ENCODE measurements at regions of chr6 and their contacts with region 1.

Region 1: DNA sequence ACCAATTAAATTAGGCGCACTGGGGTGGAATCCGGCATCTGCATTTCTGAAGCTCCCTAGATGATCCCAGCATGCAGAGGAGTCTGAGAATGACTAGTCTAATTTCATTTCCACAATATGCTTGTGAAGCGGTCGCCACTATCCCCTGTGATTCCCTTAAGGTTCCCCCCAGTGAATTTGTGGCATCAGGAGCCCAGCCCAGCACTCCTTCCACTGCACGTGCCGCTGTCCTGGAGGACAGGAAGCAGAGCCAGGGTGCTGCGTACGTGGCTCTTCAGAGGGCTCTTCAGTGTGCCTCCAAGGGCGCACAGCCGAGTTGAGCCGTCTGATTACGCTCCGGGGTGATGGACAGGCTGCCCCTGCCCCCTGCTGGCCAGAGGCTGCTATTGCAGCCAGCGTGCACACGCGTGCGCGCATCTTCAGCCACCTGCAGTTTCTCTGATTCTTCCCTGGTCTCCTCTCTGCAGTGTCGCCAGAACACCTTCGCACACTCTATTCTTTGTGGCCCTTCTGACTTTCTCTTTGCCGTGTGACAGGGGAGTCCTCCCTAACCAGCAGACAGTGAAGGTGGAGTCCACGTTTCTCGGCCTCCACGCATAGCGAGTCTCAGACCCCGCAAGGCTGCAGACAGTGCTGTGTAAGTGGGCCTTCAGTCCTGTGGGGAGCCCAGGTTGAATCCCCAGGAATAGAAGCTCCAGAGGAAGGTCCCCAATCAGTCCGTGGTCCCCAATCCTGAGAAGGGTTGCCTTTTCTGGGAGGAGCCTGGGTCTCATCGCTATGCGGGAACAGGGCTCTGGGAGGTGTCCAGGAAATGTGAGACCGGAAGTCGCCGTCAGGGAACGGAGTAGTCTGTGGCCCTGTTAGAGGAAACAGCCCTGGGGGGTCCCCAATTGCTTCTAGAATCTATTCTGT is 16.5 kb upstream of the NCR2 start:
- DNase-seq: peak; percentile 92
- ATAC-seq: peak; percentile 99
- H3K4me3 ChIP-seq: peak overlapping the region; percentile 16 to 54 (median 46)
- H3K4me3 Mint-ChIP-seq: peak overlapping the region; percentile 88
- H3K27ac ChIP-seq: peak overlapping the region; percentile 39 to 55
- H3K27ac Mint-ChIP-seq: peak overlapping the region; percentile 91
- H3K4me1 ChIP-seq: peaks cover 47 to 48% of the 10 kb centered on the region in 2 donors
- H3K4me1 Mint-ChIP-seq: peaks cover 34% of the 10 kb centered on the region
- H3K27me3 ChIP-seq: no peaks in the 10 kb centered on the region
- H3K27me3 Mint-ChIP-seq: no peaks in the 10 kb centered on the region
- CTCF ChIP-seq: peak; percentile 100

Region 2: DNA sequence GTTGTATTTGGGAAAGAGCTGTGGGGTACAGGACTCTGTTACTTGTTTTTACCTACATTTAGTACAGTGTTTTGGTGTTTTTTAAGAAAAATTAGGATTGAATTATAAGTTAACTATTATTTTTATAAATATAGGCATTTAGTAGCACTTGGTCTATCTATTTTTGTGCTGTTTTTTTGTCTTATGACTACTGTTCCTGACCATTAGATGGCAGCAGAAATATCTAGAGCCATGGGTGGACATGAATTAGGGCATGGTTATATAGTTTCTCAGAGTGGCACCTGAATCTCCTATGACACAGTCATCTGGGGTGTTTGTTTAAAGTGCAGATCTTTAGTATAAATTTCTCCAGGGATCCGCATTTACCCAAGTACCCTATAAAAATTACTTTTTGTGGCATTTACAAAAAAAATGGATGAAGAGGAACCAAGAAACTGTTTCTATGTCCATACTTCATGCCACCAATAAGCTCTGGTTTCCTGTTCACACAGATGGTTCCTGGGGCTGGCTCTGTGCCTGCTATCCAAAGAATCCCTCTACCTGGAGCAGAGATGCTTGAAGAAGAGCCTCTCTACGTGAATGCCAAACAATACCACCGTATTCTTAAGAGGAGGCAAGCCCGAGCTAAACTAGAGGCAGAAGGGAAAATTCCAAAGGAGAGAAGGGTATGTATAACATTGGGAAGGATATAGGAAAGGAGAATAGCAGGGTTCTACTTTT is 226.3 kb before region 1 on chr6:
- CTCF ChIA-PET with region 1: interaction called, 12 read pairs
- POLR2A ChIA-PET with region 1: no interaction called
- intact Hi-C with region 1: loop called (anchors 1 kb)
- DNase-seq: peak; percentile 27
- ATAC-seq: no peak
- H3K4me3 ChIP-seq: no peak overlapping the region
- H3K4me3 Mint-ChIP-seq: no peak overlapping the region
- H3K27ac ChIP-seq: no peak overlapping the region
- H3K27ac Mint-ChIP-seq: no peak overlapping the region
- H3K4me1 ChIP-seq: no peaks in the 10 kb centered on the region
- H3K4me1 Mint-ChIP-seq: no peaks in the 10 kb centered on the region
- H3K27me3 ChIP-seq: no peaks in the 10 kb centered on the region
- H3K27me3 Mint-ChIP-seq: no peaks in the 10 kb centered on the region
- CTCF ChIP-seq: peak; percentile 55

Region 3: GRCh38 chr6:41182069-41183034 is 136.6 kb before region 1 on chr6:
- CTCF ChIA-PET with region 1: no interaction called
- POLR2A ChIA-PET with region 1: no interaction called
- intact Hi-C with region 1: loop called (anchors 5 kb)
- DNase-seq: peak; percentile 66
- ATAC-seq: peak; percentile 71
- H3K4me3 ChIP-seq: no peak overlapping the region
- H3K4me3 Mint-ChIP-seq: peak overlapping the region; percentile 35
- H3K27ac ChIP-seq: peak overlapping the region; percentile 70 to 74
- H3K27ac Mint-ChIP-seq: peak overlapping the region; percentile 75
- H3K4me1 ChIP-seq: peaks cover 48 to 50% of the 10 kb centered on the region in 2 donors
- H3K4me1 Mint-ChIP-seq: peaks cover 54% of the 10 kb centered on the region
- H3K27me3 ChIP-seq: no peaks in the 10 kb centered on the region
- H3K27me3 Mint-ChIP-seq: peaks cover 3% of the 10 kb centered on the region
- CTCF ChIP-seq: peak; percentile 72

Region 4: GRCh38 chr6:41306187-41306854 is 12.6 kb before region 1 on chr6:
- CTCF ChIA-PET with region 1: interaction called, 134 read pairs
- POLR2A ChIA-PET with region 1: interaction called, 7 read pairs
- intact Hi-C with region 1: loop called (anchors 1 kb)
- DNase-seq: peak; percentile 76
- ATAC-seq: peak; percentile 39
- H3K4me3 ChIP-seq: no peak overlapping the region
- H3K4me3 Mint-ChIP-seq: no peak overlapping the region
- H3K27ac ChIP-seq: no peak overlapping the region
- H3K27ac Mint-ChIP-seq: no peak overlapping the region
- H3K4me1 ChIP-seq: peaks cover 21 to 30% of the 10 kb centered on the region in 2 donors
- H3K4me1 Mint-ChIP-seq: peaks cover 36% of the 10 kb centered on the region
- H3K27me3 ChIP-seq: no peaks in the 10 kb centered on the region
- H3K27me3 Mint-ChIP-seq: no peaks in the 10 kb centered on the region
- CTCF ChIP-seq: peak; percentile 87

Region 5: GRCh38 chr6:41334482-41335040 is 15.7 kb after region 1 on chr6:
- CTCF ChIA-PET with region 1: interaction called, 45 read pairs
- POLR2A ChIA-PET with region 1: interaction called, 3 read pairs
- intact Hi-C with region 1: no loop called
- DNase-seq: no peak
- ATAC-seq: no peak
- H3K4me3 ChIP-seq: peak overlapping the region in 1 of 5 experiments; percentile 4
- H3K4me3 Mint-ChIP-seq: peak overlapping the region; percentile 66
- H3K27ac ChIP-seq: peak overlapping the region; percentile 70 to 87
- H3K27ac Mint-ChIP-seq: peak overlapping the region; percentile 93
- H3K4me1 ChIP-seq: peaks cover 36 to 44% of the 10 kb centered on the region in 2 donors
- H3K4me1 Mint-ChIP-seq: peaks cover 45% of the 10 kb centered on the region
- H3K27me3 ChIP-seq: no peaks in the 10 kb centered on the region
- H3K27me3 Mint-ChIP-seq: no peaks in the 10 kb centered on the region
- CTCF ChIP-seq: no peak

Region 6: GRCh38 chr6:41367700-41368099 is 48.8 kb after region 1 on chr6:
- CTCF ChIA-PET with region 1: interaction called, 12 read pairs
- POLR2A ChIA-PET with region 1: no interaction called
- intact Hi-C with region 1: no loop called
- DNase-seq: no peak
- ATAC-seq: no peak
- H3K4me3 ChIP-seq: no peak overlapping the region
- H3K4me3 Mint-ChIP-seq: no peak overlapping the region
- H3K27ac ChIP-seq: no peak overlapping the region
- H3K27ac Mint-ChIP-seq: no peak overlapping the region
- H3K4me1 ChIP-seq: peaks cover 16 to 23% of the 10 kb centered on the region in 2 donors
- H3K4me1 Mint-ChIP-seq: peaks cover 22% of the 10 kb centered on the region
- H3K27me3 ChIP-seq: peaks cover 2 to 53% (median 23%) of the 10 kb centered on the region in 4 experiments
- H3K27me3 Mint-ChIP-seq: peaks cover 55% of the 10 kb centered on the region
- CTCF ChIP-seq: no peak

Measured in B cell (primary cell).